Activated T-helper 2 cell treated with anti-CD3 and anti-CD28 coated beads, Interferon-gamma antibody, Interleukin-2, Interleukin-4, amounts not matched to agents 10 μg/mL and 5 μg/mL and 100 μg/mL, durations not matched to agents 14 hours and 24 hours and 36 hours (primary cell): ENCODE measurements at regions of chr3 and their contacts with region 1.

Region 1: DNA sequence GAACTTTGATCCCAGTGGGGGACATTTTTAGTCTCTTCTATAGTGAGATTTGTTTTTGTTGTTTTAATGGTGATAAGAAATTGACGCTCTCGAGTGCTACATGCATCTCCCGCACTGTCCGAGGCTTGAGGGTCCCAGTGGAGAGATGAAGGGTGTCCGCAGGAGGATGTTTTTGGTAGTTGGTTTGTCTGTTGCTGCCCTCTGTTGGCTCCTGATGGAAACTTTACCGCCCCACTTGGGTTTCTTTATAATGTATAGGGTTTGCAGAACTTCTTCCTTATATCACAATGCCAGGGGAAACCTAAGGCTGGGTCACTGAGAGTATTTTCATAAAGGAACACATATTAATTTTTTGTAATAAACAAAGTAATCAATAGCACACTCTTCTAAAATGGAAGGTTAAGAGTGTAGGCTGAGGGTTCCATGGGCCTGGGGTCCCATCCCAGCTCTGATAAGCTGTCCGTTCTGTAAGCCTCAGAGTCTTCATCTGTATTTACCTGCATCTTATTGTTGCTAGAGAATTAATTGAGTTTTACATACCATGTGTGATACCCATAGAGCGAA is 185.3 kb upstream of the FEZF2 start:
- DNase-seq: no peak
- H3K4me3 Mint-ChIP-seq: no peak overlapping the region
- H3K27ac Mint-ChIP-seq: no peak overlapping the region
- H3K4me1 Mint-ChIP-seq: no peaks in the 10 kb centered on the region
- H3K27me3 Mint-ChIP-seq: no peaks in the 10 kb centered on the region

Region 2: DNA sequence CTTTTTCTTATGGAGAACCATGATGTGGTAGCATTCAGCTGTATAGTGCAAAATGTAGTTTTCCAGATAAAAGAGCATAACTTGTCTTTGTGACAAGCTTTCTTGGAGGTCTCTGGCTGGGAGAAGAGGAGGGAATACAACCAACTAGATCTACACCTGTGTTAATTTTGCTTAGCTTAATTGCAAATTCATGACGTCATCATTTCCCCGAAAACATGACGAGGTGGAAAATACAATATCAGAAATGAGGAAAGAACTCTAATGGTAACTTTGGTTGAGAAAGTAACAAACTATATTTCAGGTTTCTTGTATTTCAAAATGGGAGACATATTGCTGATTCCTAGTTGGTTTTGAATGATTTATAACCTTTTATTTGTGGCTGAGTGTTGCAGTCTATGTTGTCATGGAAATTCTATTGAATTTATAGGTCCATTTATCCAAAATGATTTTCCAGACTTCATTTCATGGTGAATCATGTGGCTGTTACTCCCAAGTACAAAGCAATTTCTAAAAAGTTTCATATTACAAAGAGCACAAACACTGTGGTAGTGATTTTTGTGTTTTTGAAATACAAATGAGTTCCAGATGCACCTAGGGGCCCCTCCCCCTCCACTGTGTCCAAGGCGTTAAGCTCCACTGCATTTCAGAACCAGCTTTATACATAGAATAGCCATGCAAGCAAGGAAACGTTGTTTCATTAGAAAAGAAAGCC is 492.5 kb before region 1 on chr3:
- intact Hi-C with region 1: no loop called
- DNase-seq: no peak
- H3K4me3 Mint-ChIP-seq: no peak overlapping the region
- H3K27ac Mint-ChIP-seq: no peak overlapping the region
- H3K4me1 Mint-ChIP-seq: no peaks in the 10 kb centered on the region
- H3K27me3 Mint-ChIP-seq: no peaks in the 10 kb centered on the region

Region 3: GRCh38 chr3:62201438-62202035 is 357.1 kb before region 1 on chr3:
- intact Hi-C with region 1: loop called (anchors 10 kb)
- DNase-seq: no peak
- H3K4me3 Mint-ChIP-seq: no peak overlapping the region
- H3K27ac Mint-ChIP-seq: no peak overlapping the region
- H3K4me1 Mint-ChIP-seq: no peaks in the 10 kb centered on the region
- H3K27me3 Mint-ChIP-seq: no peaks in the 10 kb centered on the region

Region 4: GRCh38 chr3:62332835-62333244 is 225.8 kb before region 1 on chr3:
- intact Hi-C with region 1: loop called (anchors 5 kb)
- DNase-seq: no peak
- H3K4me3 Mint-ChIP-seq: no peak overlapping the region
- H3K27ac Mint-ChIP-seq: no peak overlapping the region
- H3K4me1 Mint-ChIP-seq: peaks cover 2% of the 10 kb centered on the region
- H3K27me3 Mint-ChIP-seq: no peaks in the 10 kb centered on the region